ENCODE measurements at regions of chrX and their contacts with region 1.

Region 1: GRCh38 chrX:140766024-140766611 is 56.6 kb downstream of the LINC00632 start:
- DNase-seq: peak; percentile 40
- H3K4me3 ChIP-seq: no peak overlapping the region
- H3K27ac ChIP-seq: no peak overlapping the region
- H3K4me1 ChIP-seq: no peaks in the 10 kb centered on the region
- CTCF ChIP-seq: peak; percentile 79

Region 2: DNA sequence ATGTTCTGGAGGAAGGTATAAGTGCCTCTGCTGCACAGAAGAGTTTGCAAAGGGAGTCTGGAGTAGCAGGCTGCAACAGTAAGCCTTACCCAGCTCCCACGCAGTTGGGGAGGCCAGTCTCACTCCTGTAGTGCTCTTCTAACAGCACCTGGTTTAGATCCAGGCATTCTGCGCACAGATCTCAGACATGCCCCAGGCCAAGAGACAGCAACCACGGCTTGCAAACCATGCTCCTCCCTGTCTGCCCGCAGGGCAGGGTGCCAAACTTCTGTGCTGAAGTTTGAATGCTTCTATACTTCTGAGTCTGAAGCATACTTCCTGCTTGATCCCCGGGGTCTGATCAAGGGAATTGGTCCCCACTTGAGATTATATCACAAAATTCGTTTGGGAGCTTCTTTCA is 49.8 kb after region 1 on chrX:
- CTCF ChIA-PET with region 1: no interaction called
- POLR2A ChIA-PET with region 1: no interaction called
- intact Hi-C with region 1: no loop called
- DNase-seq: no peak
- H3K4me3 ChIP-seq: no peak overlapping the region
- H3K27ac ChIP-seq: no peak overlapping the region
- H3K4me1 ChIP-seq: peaks cover 7% of the 10 kb centered on the region
- CTCF ChIP-seq: no peak

Region 3: DNA sequence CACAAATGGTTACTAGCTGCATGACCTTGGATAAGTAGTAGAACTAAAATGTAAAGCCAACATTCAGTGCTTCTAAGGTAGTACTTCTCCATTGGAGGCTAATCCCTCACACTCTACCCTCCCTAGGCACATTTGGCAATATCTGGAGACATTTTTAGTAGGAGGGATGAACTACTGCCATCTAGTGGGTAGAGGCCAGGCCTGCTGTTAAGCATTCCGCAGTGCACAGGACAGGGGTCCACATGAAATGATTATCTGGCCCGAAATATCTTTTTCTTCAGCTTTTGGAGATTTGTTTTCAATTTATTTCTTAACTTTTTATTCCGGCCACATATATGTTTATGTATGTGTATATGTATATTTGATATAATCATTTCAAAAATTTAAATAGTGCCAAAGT is 512.2 kb after region 1 on chrX:
- CTCF ChIA-PET with region 1: no interaction called
- POLR2A ChIA-PET with region 1: no interaction called
- intact Hi-C with region 1: loop called (anchors 2 kb)
- DNase-seq: peak; percentile 22
- H3K4me3 ChIP-seq: no peak overlapping the region
- H3K27ac ChIP-seq: no peak overlapping the region
- H3K4me1 ChIP-seq: no peaks in the 10 kb centered on the region
- CTCF ChIP-seq: peak; percentile 73